ENCODE measurements at regions of chr1 and their contacts with region 1.

Region 1: DNA sequence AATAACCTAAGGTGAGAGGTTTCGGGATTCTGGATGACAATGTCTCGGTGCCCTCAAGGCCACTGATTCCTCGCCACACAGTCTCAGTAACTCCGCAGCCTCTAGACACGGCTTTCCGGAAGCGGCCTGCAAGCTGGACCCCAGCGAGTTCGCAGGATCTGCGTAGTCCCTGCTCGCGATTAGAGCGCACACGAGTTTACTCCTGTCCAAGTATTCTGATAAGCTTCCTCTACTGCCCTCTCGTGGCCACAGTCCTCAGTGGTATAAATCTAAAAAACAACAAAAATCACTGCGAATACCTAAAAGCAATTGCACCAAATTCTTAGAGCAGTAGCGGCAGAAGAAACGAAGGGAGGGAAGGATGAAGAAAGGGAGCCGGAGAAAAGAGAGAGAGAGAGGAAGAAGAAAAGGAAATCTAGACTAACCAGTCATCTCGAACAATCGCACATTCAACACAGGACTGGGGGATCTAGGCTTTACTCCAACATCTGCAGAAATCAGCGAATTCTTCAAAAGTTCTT is 1.1 kb upstream of the PLXNA2 start:
- H3K4me3 Mint-ChIP-seq: peak overlapping the region; percentile 98
- H3K27ac Mint-ChIP-seq: peak overlapping the region; percentile 89
- H3K4me1 Mint-ChIP-seq: peaks cover 39% of the 10 kb centered on the region
- H3K27me3 Mint-ChIP-seq: peaks cover 50% of the 10 kb centered on the region

Region 2: GRCh38 chr1:207579436-207579799 is 665.8 kb before region 1 on chr1:
- intact Hi-C with region 1: no loop called
- H3K4me3 Mint-ChIP-seq: no peak overlapping the region
- H3K27ac Mint-ChIP-seq: no peak overlapping the region
- H3K4me1 Mint-ChIP-seq: peaks cover 7% of the 10 kb centered on the region
- H3K27me3 Mint-ChIP-seq: no peaks in the 10 kb centered on the region

Region 3: GRCh38 chr1:208025031-208025430 is 220.2 kb before region 1 on chr1:
- intact Hi-C with region 1: loop called (anchors 2 kb)
- H3K4me3 Mint-ChIP-seq: no peak overlapping the region
- H3K27ac Mint-ChIP-seq: no peak overlapping the region
- H3K4me1 Mint-ChIP-seq: peaks cover 14% of the 10 kb centered on the region
- H3K27me3 Mint-ChIP-seq: peaks cover 30% of the 10 kb centered on the region

Region 4: GRCh38 chr1:208065862-208066261 is 179.4 kb before region 1 on chr1:
- intact Hi-C with region 1: no loop called
- H3K4me3 Mint-ChIP-seq: no peak overlapping the region
- H3K27ac Mint-ChIP-seq: peak overlapping the region; percentile 74
- H3K4me1 Mint-ChIP-seq: peaks cover 72% of the 10 kb centered on the region
- H3K27me3 Mint-ChIP-seq: peaks cover 60% of the 10 kb centered on the region

Region 5: DNA sequence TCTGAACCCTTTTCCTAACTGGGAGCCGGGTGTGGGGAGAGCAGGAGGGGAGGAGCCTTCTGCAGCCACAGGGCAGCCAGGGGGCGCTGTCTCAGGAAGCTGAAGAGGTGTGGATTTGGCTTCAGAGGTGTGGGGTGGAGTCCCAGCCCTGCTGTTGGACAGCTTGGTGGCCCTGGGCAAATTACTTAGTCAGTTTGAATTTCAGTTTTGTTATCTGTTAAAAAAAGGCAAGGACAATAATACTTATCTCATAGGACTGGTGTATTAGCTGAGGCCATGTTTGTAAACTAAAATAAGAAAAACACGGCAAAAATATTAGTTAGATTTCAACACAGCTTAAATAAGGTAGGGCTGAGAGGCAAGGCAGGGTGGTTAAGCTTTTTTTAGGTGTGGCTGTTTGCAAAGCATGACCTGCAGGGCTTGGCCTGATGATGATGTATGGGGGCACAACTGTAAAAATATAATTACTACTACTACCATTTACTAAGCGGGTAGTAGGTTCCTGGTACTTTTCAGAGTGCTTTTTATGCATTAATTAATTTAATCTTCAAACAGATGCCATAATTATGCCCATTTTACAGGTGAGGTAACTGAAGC is 112.9 kb before region 1 on chr1:
- intact Hi-C with region 1: loop called (anchors 1 kb)
- H3K4me3 Mint-ChIP-seq: no peak overlapping the region
- H3K27ac Mint-ChIP-seq: no peak overlapping the region
- H3K4me1 Mint-ChIP-seq: peaks cover 11% of the 10 kb centered on the region
- H3K27me3 Mint-ChIP-seq: peaks cover 26% of the 10 kb centered on the region